Left lung (tissue), 14 donors: ENCODE measurements at regions of chr10 and their contacts with region 1.

Region 1: GRCh38 chr10:96758423-96758822 is 38.1 kb upstream of the PIK3AP1 start:
- DNase-seq: no peak
- ATAC-seq: peak; percentile 37
- H3K4me3 ChIP-seq: no peak overlapping the region
- H3K27ac ChIP-seq: no peak overlapping the region
- H3K4me1 ChIP-seq: peaks cover 0 to 5% of the 10 kb centered on the region in 2 donors
- H3K27me3 ChIP-seq: no peaks in the 10 kb centered on the region
- CTCF ChIP-seq: no peak

Region 2: GRCh38 chr10:96642973-96643372 is 115.5 kb before region 1 on chr10:
- intact Hi-C with region 1: loop called in 1 of 2 experiments (anchors 10 kb)
- DNase-seq: peak in 2 of 4 donors; percentile 84 to 89
- ATAC-seq: peak; percentile 74
- H3K4me3 ChIP-seq: no peak overlapping the region
- H3K27ac ChIP-seq: no peak overlapping the region
- H3K4me1 ChIP-seq: peaks cover 0 to 48% of the 10 kb centered on the region in 2 donors
- H3K27me3 ChIP-seq: no peaks in the 10 kb centered on the region
- CTCF ChIP-seq: peak; percentile 56 to 68